CD14-positive monocyte (primary cell): ENCODE measurements at regions of chr10 and their contacts with region 1.

Region 1: DNA sequence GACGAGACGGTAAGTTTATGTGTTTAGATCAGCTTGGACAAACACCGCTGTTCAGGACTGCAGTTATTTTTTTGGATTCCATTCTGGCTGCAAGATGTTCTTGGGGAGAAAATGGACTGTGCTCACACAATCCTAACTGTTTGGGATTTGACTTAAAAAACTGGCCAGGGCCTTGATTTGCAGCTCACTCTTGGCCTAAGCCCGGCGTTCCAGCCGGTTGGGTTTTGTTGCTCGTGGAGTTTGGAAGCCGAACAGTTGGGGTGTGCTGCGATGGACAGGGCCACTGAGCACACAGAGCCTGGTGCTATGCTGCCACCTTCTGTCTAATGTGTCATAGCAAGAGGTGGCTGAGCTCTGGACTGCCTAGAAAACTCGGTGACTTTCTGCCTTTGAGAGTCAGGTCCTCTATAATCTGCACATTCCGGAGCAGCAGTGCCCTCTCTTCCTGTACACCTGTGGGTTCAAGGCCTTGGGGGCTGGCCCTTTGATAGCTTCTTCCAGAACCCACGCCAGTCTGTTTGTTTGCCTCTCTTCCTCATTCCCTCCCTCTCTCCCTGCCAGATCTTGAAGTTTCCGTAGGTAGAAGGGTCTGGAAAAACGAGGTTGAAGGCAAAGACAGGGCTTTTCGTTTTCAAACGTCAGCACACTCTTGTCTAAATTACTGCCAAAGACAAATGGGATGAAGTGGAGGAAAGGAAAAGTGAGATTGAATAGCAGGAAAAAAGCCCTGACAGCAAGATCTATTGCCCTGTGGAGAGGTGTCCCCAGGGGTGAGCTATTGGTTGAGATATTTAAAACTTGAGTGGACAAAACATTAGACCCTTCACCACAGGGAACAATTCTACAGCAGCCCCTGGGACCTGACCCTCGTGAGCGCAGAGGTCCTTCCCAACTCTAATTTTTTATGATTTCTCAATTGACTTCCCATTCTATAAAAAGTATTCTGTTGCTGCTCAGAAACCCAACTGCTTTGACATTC is 167.5 kb upstream of the HABP2 start:
- DNase-seq: peak; percentile 68 to 77 (median 77)
- H3K4me3 ChIP-seq: no peak overlapping the region
- H3K4me3 Mint-ChIP-seq: no peak overlapping the region
- H3K27ac ChIP-seq: no peak overlapping the region
- H3K27ac Mint-ChIP-seq: peak overlapping the region in 3 of 7 donors; percentile 8 to 40 (median 35)
- H3K4me1 ChIP-seq: peaks cover 27 to 33% of the 10 kb centered on the region in 2 donors
- H3K4me1 Mint-ChIP-seq: peaks cover 36% of the 10 kb centered on the region
- H3K27me3 ChIP-seq: no peaks in the 10 kb centered on the region
- H3K27me3 Mint-ChIP-seq: peaks cover 0 to 9% (median 1%) of the 10 kb centered on the region in 3 donors
- CTCF ChIP-seq: peak; percentile 81

Region 2: DNA sequence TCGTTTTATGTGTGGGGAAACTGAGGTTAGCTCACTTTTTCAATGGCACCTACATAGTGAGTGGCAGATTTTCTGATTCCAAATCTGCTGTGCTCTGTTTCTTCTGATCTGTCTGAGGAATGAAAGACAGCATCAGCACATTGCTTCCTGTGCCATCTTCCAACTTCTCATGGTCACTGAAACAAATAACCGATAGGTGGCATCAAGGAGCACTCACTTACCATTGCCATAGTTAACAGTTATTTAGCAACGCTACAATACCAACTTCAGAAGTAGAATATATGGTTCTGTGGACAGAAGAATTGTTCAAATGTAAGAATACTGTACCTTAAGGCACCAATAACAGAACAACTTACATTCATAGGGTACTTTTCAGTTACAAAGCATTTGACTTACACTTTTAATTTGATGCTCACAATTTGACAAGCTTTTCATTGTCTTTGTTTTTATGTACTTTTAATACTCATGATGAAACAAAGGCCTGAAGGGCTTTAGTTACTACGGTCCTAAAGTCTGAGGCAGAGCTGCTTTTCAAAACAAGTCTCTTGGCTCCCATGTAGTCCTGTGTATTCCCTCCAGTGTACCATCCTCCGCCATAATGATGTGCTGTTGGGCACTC is 664.1 kb before region 1 on chr10:
- intact Hi-C with region 1: loop called (anchors 5 to 10 kb)
- DNase-seq: peak; percentile 28 to 47 (median 44)
- H3K4me3 ChIP-seq: no peak overlapping the region
- H3K4me3 Mint-ChIP-seq: no peak overlapping the region
- H3K27ac ChIP-seq: no peak overlapping the region
- H3K27ac Mint-ChIP-seq: no peak overlapping the region
- H3K4me1 ChIP-seq: no peaks in the 10 kb centered on the region
- H3K4me1 Mint-ChIP-seq: no peaks in the 10 kb centered on the region
- H3K27me3 ChIP-seq: no peaks in the 10 kb centered on the region
- H3K27me3 Mint-ChIP-seq: peaks cover 0 to 3% (median 0%) of the 10 kb centered on the region in 3 donors
- CTCF ChIP-seq: peak; percentile 76

Region 3: DNA sequence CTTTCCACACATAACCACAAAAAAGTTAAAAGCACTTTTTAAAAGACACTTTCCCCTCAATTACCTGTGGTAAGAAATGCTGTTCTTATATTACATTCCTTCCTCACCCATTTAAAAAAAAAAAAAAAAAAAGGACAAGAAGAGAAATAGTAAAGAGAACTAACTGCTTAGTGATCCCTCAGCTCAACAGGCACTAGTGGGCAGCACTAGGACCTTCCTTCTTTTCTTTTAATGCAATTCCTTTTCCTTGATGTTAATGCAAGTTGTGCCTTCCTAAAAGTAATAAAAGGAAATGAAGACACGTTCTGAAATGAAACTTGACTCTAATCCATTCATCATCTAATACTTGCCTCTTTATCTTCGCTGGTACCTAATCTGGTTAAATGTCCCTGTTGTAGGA is 245.6 kb before region 1 on chr10:
- intact Hi-C with region 1: loop called in 1 of 2 experiments (anchors 5 kb)
- DNase-seq: peak in 2 of 3 donors; percentile 12 to 27
- H3K4me3 ChIP-seq: no peak overlapping the region
- H3K4me3 Mint-ChIP-seq: no peak overlapping the region
- H3K27ac ChIP-seq: no peak overlapping the region
- H3K27ac Mint-ChIP-seq: no peak overlapping the region
- H3K4me1 ChIP-seq: peaks cover 20 to 24% of the 10 kb centered on the region in 2 donors
- H3K4me1 Mint-ChIP-seq: peaks cover 25% of the 10 kb centered on the region
- H3K27me3 ChIP-seq: no peaks in the 10 kb centered on the region
- H3K27me3 Mint-ChIP-seq: peaks cover 0 to 2% (median 1%) of the 10 kb centered on the region in 3 donors
- CTCF ChIP-seq: no peak

Region 4: GRCh38 chr10:113232928-113233511 is 152.3 kb before region 1 on chr10:
- intact Hi-C with region 1: loop called in 1 of 2 experiments (anchors 10 kb)
- DNase-seq: peak in 2 of 3 donors; percentile 27 to 30
- H3K4me3 ChIP-seq: peak overlapping the region in 1 of 3 experiments; percentile 40
- H3K4me3 Mint-ChIP-seq: peak overlapping the region; percentile 56 to 64
- H3K27ac ChIP-seq: peak overlapping the region in 1 of 2 donors; percentile 66
- H3K27ac Mint-ChIP-seq: peak overlapping the region in 4 of 7 donors; percentile 30 to 79 (median 66)
- H3K4me1 ChIP-seq: peaks cover 20 to 33% of the 10 kb centered on the region in 2 donors
- H3K4me1 Mint-ChIP-seq: peaks cover 26% of the 10 kb centered on the region
- H3K27me3 ChIP-seq: no peaks in the 10 kb centered on the region
- H3K27me3 Mint-ChIP-seq: peaks cover 0 to 2% (median 0%) of the 10 kb centered on the region in 3 donors
- CTCF ChIP-seq: no peak